ENCODE measurements at regions of chr16 and their contacts with region 1.

Region 1: GRCh38 chr16:24729362-24729984 is at the start of gene TNRC6A:
- DNase-seq: peak; percentile 81 to 89 (median 87)
- H3K4me3 ChIP-seq: peak within 1 kb of the TSS; percentile 65 to 78 (median 74)
- H3K4me3 Mint-ChIP-seq: peak within 1 kb of the TSS; percentile 98
- H3K27ac ChIP-seq: peak within 1 kb of the TSS; percentile 62 to 68
- H3K27ac Mint-ChIP-seq: peak within 1 kb of the TSS; percentile 84 to 95 (median 94)
- H3K4me1 ChIP-seq: peaks cover 15 to 29% of the 10 kb centered on the region in 2 donors
- H3K4me1 Mint-ChIP-seq: peaks cover 27% of the 10 kb centered on the region
- H3K27me3 ChIP-seq: no peaks in the 10 kb centered on the region
- H3K27me3 Mint-ChIP-seq: peaks cover 3 to 5% (median 4%) of the 10 kb centered on the region in 3 donors
- CTCF ChIP-seq: no peak
- polyA plus RNA-seq, gene TNRC6A: 3.3 to 36.1 (median 4.0) TPM

Region 2: DNA sequence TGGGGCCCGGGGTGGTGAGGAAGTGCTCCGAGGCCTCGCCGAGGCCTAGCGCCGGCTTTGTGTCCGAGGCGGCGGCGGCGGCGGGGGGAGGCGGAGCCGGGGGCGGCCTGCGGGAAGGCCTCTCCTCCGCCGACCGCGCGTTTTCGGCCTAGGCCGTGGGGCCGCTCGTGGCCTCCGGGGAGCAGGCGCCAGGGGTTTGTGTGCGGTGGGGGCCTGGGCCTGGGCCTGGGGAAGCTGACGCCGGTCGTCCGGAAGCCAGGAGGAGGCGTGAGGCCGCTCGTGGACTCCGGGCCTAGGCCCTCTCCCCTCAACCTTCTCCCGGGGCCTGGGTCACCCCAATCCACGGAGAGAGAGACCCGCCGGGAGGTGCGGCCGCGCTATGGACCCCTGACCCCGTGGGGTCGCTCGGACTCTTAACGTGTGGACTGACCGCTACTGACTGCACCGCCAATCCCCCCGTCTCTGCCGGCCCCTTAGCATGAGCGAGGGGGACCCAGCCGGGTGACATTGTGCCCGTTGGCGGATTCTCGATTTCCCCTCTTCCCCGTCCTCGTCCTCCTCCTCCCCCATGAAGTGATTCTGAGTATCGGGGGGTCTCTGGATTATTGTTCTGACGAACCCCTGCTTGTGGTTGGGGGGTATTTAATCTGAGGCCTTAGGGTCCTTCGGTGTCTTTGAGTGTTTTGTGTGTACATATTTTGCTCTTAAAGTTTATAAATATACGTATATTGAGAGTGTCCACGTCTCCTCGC is 189.4 kb before region 1 on chr16:
- intact Hi-C with region 1: loop called in 1 of 2 experiments (anchors 5 kb)
- DNase-seq: peak in 1 of 3 donors; percentile 31
- H3K4me3 ChIP-seq: peak overlapping the region; percentile 70 to 98 (median 80)
- H3K4me3 Mint-ChIP-seq: peak overlapping the region; percentile 87 to 98
- H3K27ac ChIP-seq: peak overlapping the region; percentile 97
- H3K27ac Mint-ChIP-seq: peak overlapping the region; percentile 94 to 100 (median 100)
- H3K4me1 ChIP-seq: peaks cover 35% of the 10 kb centered on the region in 2 donors
- H3K4me1 Mint-ChIP-seq: peaks cover 30% of the 10 kb centered on the region
- H3K27me3 ChIP-seq: no peaks in the 10 kb centered on the region
- H3K27me3 Mint-ChIP-seq: peaks cover 0 to 1% (median 0%) of the 10 kb centered on the region in 3 donors
- CTCF ChIP-seq: no peak

Region 3: DNA sequence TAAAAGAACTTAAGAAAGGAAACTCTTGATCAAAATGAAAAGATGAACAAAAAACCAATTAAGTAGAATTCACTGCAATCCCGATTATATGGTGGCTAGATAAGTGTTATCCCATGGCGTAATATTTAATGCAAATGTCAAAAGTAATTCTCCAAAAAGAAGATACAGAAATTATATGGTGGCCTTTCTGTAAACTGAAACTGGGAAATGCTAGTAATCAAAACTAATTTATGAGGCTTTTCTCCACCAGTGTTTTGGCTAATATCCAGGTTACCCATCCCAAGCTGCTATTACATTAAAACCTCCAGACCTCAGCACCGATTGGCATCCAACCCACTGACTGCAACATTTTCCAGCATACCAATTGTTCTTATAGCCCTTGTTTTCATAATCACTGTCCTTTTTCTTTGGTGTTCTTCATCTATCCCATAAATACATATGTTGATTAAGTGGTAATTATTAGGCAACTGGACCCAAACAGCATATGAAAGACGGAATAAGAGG is 77.2 kb before region 1 on chr16:
- intact Hi-C with region 1: no loop called
- DNase-seq: no peak
- H3K4me3 ChIP-seq: no peak overlapping the region
- H3K4me3 Mint-ChIP-seq: no peak overlapping the region
- H3K27ac ChIP-seq: no peak overlapping the region
- H3K27ac Mint-ChIP-seq: no peak overlapping the region
- H3K4me1 ChIP-seq: no peaks in the 10 kb centered on the region
- H3K4me1 Mint-ChIP-seq: no peaks in the 10 kb centered on the region
- H3K27me3 ChIP-seq: no peaks in the 10 kb centered on the region
- H3K27me3 Mint-ChIP-seq: peaks cover 2 to 5% (median 4%) of the 10 kb centered on the region in 3 donors
- CTCF ChIP-seq: no peak

Region 4: GRCh38 chr16:24930437-24930836 is 201.0 kb after region 1 on chr16:
- intact Hi-C with region 1: no loop called
- DNase-seq: no peak
- H3K4me3 ChIP-seq: no peak overlapping the region
- H3K4me3 Mint-ChIP-seq: no peak overlapping the region
- H3K27ac ChIP-seq: no peak overlapping the region
- H3K27ac Mint-ChIP-seq: no peak overlapping the region
- H3K4me1 ChIP-seq: no peaks in the 10 kb centered on the region
- H3K4me1 Mint-ChIP-seq: no peaks in the 10 kb centered on the region
- H3K27me3 ChIP-seq: no peaks in the 10 kb centered on the region
- H3K27me3 Mint-ChIP-seq: peaks cover 0 to 2% (median 0%) of the 10 kb centered on the region in 3 donors
- CTCF ChIP-seq: no peak

Measured in CD14-positive monocyte (primary cell).